ENCODE measurements at regions of chr15 and their contacts with region 1.

Region 1: GRCh38 chr15:70111203-70112073 is 13.7 kb upstream of the TLE3 start:
- DNase-seq: peak; percentile 88

Region 2: GRCh38 chr15:70156671-70157271 is 45.3 kb after region 1 on chr15:
- intact Hi-C with region 1: loop called (anchors 5 kb)
- DNase-seq: peak; percentile 77

Region 3: GRCh38 chr15:70281811-70282307 is 170.4 kb after region 1 on chr15:
- intact Hi-C with region 1: no loop called
- DNase-seq: peak; percentile 71

Region 4: GRCh38 chr15:70451821-70452653 is 340.6 kb after region 1 on chr15:
- intact Hi-C with region 1: loop called (anchors 10 kb)
- DNase-seq: no peak

Region 5: DNA sequence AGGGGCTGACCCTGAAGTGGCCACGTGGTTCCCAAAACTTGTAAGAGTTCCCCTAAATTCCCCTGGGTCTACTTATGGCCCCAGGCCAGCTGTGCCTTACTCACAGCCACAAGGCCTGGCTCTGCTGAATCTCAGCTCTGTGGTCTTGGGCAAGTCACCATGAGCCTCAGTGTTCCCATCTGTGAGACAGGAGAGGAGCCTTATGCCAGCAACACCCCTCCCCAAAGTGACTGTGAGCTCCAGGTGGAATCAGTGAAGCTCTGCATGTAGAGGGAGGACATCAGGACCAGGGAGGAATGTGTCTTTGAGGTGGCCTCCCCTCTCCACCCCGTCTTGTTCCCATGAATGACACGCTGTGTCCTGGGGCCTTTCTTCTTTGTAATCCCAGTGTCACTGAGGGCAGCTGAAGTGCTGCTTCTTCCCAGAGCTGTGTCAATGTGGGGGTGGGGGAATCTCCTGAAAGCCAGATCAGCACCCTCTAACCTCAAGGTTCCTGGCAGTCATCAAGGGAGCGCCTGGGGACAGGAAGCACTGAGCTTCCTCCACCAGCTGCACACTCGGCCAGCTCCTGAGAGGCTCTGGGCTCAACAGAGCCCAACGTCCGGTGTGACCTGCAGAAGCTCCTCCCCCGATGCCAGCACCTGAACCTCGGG is 393.0 kb after region 1 on chr15:
- intact Hi-C with region 1: no loop called
- DNase-seq: peak; percentile 90

Measured in cardiac septum (tissue), 1 donor.